Right cardiac atrium (tissue), 5 donors: ENCODE measurements at regions of chr1 and their contacts with region 1.

Region 1: DNA sequence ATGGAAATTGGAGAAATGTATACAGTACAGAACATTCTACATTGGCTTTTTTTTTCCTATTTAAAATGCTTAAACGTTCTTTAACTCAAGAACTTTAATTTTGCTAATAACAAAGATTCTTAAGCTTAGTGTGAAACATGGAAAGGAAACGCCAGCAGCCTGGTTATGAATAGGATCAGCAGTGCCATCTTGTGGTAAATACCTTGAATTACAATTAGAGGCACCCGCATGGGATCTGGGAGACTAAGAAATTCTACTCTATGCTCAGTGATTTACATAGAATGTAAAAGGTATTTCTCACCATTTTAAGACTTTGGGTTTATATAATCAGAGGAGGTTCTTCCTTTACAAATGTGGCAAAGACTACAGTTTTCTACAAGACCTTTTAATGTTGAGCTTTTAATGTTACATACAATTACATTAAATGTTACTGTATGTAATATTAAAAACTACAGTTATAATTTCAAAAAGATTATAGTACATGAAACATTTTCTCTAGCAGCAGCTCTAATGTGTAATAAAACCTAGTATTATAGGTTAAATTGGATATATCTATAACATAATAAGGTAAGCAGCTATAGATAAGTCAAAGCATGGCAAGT is 32.1 kb upstream of the APOBEC4 start:
- DNase-seq: no peak
- ATAC-seq: peak; percentile 57 to 66
- H3K4me3 ChIP-seq: no peak overlapping the region
- H3K27ac ChIP-seq: no peak overlapping the region
- H3K4me1 ChIP-seq: no peaks in the 10 kb centered on the region
- H3K27me3 ChIP-seq: no peaks in the 10 kb centered on the region

Region 2: GRCh38 chr1:183655562-183656075 is 29.6 kb before region 1 on chr1:
- intact Hi-C with region 1: loop called in 1 of 4 experiments (anchors 5 kb)
- DNase-seq: peak; percentile 80 to 93 (median 84)
- ATAC-seq: peak; percentile 80 to 87
- H3K4me3 ChIP-seq: no peak overlapping the region
- H3K27ac ChIP-seq: no peak overlapping the region
- H3K4me1 ChIP-seq: no peaks in the 10 kb centered on the region
- H3K27me3 ChIP-seq: no peaks in the 10 kb centered on the region